Calu3 (cell line): ENCODE measurements at regions of chr1 and their contacts with region 1.

Region 1: GRCh38 chr1:33472349-33472980 is at the start of gene ZSCAN20:
- DNase-seq: peak; percentile 97
- H3K4me3 Mint-ChIP-seq: peak within 1 kb of the TSS; percentile 56
- H3K27ac Mint-ChIP-seq: peak within 1 kb of the TSS; percentile 25
- H3K4me1 Mint-ChIP-seq: peaks cover 20% of the 10 kb centered on the region
- H3K27me3 Mint-ChIP-seq: peaks cover 13% of the 10 kb centered on the region
- CTCF ChIP-seq: no peak
- total RNA-seq, gene ZSCAN20: 6.6 and 8.2 TPM in 2 replicates

Region 2: GRCh38 chr1:33094971-33095604 is 377.4 kb before region 1 on chr1:
- CTCF ChIA-PET with region 1: interaction called, 3 read pairs
- intact Hi-C with region 1: loop called (anchors 5 kb)
- DNase-seq: peak; percentile 76
- H3K4me3 Mint-ChIP-seq: no peak overlapping the region
- H3K27ac Mint-ChIP-seq: no peak overlapping the region
- H3K4me1 Mint-ChIP-seq: peaks cover 17% of the 10 kb centered on the region
- H3K27me3 Mint-ChIP-seq: peaks cover 8% of the 10 kb centered on the region
- CTCF ChIP-seq: peak; percentile 90

Region 3: GRCh38 chr1:33219881-33220661 is 252.4 kb before region 1 on chr1:
- CTCF ChIA-PET with region 1: no interaction called
- intact Hi-C with region 1: loop called (anchors 5 kb)
- DNase-seq: peak; percentile 80
- H3K4me3 Mint-ChIP-seq: no peak overlapping the region
- H3K27ac Mint-ChIP-seq: peak overlapping the region; percentile 83
- H3K4me1 Mint-ChIP-seq: peaks cover 34% of the 10 kb centered on the region
- H3K27me3 Mint-ChIP-seq: no peaks in the 10 kb centered on the region
- CTCF ChIP-seq: no peak

Region 4: GRCh38 chr1:33367485-33368405 is 104.7 kb before region 1 on chr1:
- CTCF ChIA-PET with region 1: no interaction called
- intact Hi-C with region 1: loop called (anchors 5 kb)
- DNase-seq: peak; percentile 90
- H3K4me3 Mint-ChIP-seq: peak overlapping the region; percentile 16
- H3K27ac Mint-ChIP-seq: no peak overlapping the region
- H3K4me1 Mint-ChIP-seq: no peaks in the 10 kb centered on the region
- H3K27me3 Mint-ChIP-seq: no peaks in the 10 kb centered on the region
- CTCF ChIP-seq: peak; percentile 91

Region 5: GRCh38 chr1:33610864-33611455 is 138.5 kb after region 1 on chr1:
- CTCF ChIA-PET with region 1: no interaction called
- intact Hi-C with region 1: loop called (anchors 5 kb)
- DNase-seq: no peak
- H3K4me3 Mint-ChIP-seq: no peak overlapping the region
- H3K27ac Mint-ChIP-seq: no peak overlapping the region
- H3K4me1 Mint-ChIP-seq: no peaks in the 10 kb centered on the region
- H3K27me3 Mint-ChIP-seq: peaks cover 70% of the 10 kb centered on the region
- CTCF ChIP-seq: no peak